Transverse colon (tissue), 4 donors: ENCODE measurements at regions of chr4 and their contacts with region 1.

Region 1: GRCh38 chr4:183602557-183603027 is 56.4 kb downstream of the RWDD4 start:
- DNase-seq: no peak
- H3K4me3 ChIP-seq: no peak overlapping the region
- H3K27ac ChIP-seq: no peak overlapping the region
- H3K4me1 ChIP-seq: no peaks in the 10 kb centered on the region
- H3K27me3 ChIP-seq: peaks cover 12% of the 10 kb centered on the region
- CTCF ChIP-seq: peak in 4 of 5 experiments; percentile 20 to 31 (median 25)
- EP300 ChIP-seq: no peak
- POLR2A ChIP-seq: no peak

Region 2: DNA sequence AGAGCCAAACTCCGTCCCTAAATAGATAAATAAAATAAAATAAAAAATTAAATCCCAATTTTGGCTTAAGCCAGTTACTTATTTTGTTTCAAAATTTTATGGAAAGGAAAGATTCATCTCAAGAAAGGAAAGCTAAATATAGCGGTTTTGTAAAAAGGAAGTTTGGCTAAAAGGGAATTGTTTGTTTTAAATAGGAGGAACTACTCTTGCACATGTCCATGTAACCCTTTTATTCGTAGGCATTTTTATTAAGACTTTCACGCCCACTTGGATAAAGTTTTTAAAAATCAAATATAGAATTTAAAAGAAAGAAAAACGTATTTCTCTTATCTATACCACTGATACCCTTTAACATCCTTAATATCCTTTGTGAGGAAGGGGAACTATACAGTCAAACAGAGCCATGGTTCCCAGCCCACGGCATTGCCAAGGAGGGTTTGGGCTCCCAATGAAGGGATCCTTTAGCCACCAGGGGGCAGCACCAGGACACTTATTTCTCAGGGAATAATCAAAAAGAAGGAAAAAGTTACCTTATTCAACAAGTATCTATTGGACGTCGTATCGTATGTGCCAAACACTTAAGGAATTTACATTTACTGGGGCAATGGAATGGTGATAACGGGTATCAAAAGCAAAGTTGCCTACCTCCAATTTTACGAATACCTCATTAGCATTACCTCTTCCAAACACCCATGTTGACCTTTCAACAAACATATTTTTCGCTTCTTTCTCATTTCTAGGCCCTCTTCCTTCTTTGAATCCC is 130.5 kb before region 1 on chr4:
- in situ Hi-C with region 1: loop called in 2 of 4 experiments (anchors 10 kb)
- intact Hi-C with region 1: loop called (anchors 10 kb)
- DNase-seq: peak; percentile 88
- H3K4me3 ChIP-seq: no peak overlapping the region
- H3K27ac ChIP-seq: no peak overlapping the region
- H3K4me1 ChIP-seq: peaks cover 0 to 6% (median 2%) of the 10 kb centered on the region in 4 donors
- H3K27me3 ChIP-seq: peaks cover 3% of the 10 kb centered on the region
- CTCF ChIP-seq: peak; percentile 83 to 91 (median 87)
- EP300 ChIP-seq: no peak
- POLR2A ChIP-seq: no peak

Region 3: DNA sequence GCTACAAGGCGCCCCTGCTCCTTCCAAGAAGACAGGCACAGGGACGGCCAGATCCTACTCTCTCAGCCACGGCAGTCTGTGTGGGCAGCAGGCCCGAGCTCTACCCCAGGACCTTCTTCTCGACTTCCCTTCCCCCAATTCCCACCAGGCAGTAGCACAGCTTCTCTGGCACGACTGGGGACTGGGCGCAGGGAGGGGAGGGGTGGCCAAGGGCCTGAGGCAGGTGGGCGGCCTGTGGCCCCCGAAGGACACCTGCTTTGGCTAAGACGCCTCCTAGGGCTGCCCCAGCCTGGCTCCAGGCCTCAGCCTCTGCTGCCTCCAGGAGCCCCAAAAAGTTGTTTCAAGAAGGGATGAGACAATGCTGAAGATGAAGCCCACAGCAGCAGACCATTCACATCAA is 896.0 kb after region 1 on chr4:
- in situ Hi-C with region 1: no loop called
- intact Hi-C with region 1: no loop called
- DNase-seq: no peak
- H3K4me3 ChIP-seq: no peak overlapping the region
- H3K27ac ChIP-seq: no peak overlapping the region
- H3K4me1 ChIP-seq: peaks cover 0 to under 1% (median 0%) of the 10 kb centered on the region in 4 donors
- H3K27me3 ChIP-seq: no peaks in the 10 kb centered on the region
- CTCF ChIP-seq: no peak
- EP300 ChIP-seq: no peak
- POLR2A ChIP-seq: no peak